ENCODE measurements at regions of chr12 and their contacts with region 1.

Region 1: DNA sequence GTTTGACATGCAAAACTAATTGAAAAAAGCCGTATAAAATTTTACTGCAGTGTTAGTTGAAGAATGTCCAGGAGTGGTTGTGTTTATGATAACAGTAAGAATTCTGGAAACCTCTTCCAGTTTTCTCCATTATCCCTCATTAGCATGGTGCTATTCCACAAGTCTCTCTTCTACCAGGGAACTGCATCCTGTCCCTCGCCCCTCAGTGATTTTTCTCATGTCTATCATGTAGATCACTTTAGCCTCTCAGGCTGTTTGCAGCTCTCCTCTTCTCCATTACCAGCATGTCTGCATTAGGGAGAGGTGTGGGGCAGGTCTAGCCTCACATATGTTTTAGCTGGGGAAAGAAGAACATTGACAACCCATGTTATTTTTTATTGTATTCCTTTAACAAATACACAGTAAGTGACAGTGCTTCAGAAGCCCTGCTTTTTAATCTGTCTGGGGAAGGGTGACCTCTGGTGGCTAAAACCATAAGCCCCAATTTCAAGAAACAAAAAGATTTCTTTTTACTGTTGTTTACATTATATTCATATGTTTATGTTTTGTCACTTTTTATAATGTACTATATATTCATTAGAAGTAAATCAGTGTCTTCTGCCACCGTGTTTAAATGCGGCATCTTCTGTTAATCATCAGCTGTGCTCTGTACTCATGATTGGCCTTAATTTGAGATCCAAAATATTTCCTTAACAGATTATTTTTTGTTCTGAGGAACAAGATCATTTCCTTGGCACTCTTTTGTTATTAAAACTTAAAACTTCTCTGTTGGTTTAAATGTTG is 70.7 kb downstream of the RASSF8 start:
- DNase-seq: peak in 1 of 2 experiments; percentile 69
- H3K4me3 ChIP-seq: no peak overlapping the region
- H3K4me3 Mint-ChIP-seq: no peak overlapping the region
- H3K27ac Mint-ChIP-seq: no peak overlapping the region
- H3K4me1 ChIP-seq: peaks cover 50% of the 10 kb centered on the region
- H3K4me1 Mint-ChIP-seq: peaks cover 54% of the 10 kb centered on the region
- H3K27me3 ChIP-seq: no peaks in the 10 kb centered on the region
- H3K27me3 Mint-ChIP-seq: no peaks in the 10 kb centered on the region
- CTCF ChIP-seq: peak; percentile 84 to 95

Region 2: DNA sequence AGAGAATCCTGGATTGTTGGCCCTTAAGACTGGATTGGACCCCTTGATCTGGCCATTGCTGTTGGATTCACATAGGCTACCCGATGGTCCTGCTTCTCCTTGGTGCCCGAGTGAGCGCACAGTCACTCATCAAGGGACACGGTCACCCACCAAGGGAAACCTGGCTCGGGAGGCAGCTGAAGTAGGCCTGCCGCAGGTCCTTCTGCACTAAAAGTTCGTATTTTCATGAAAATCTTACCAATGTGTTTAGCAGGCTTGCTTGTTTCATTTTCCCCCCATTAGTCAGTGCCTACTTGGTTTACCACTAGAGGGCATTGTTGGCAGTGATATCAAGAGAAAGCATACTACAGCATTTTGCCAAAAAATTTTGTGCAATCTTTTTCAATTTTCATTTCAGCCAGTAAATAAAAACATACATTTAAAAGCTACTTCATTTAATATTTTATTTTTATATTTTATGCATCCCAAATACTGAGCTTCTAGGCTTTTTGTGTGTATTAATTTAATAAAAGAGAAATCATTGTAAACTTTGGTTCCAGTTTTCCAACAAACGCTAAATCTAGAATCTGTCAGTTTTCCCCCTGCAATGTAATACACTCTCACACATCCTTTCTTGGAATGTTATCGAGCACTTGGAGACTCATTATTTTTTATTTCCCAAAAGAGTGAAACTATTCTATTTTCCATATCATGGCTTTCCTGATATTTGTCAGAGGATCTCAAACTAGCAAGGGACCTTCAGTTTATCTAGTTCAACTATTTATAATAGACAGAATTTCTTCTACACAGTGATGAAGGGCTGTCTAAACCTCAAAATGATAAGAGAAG is 592.7 kb before region 1 on chr12:
- CTCF ChIA-PET with region 1: no interaction called
- POLR2A ChIA-PET with region 1: no interaction called
- intact Hi-C with region 1: loop called (anchors 1 kb)
- DNase-seq: peak in 1 of 2 experiments; percentile 75
- H3K4me3 ChIP-seq: no peak overlapping the region
- H3K4me3 Mint-ChIP-seq: peak overlapping the region; percentile 32
- H3K27ac Mint-ChIP-seq: peak overlapping the region; percentile 67
- H3K4me1 ChIP-seq: peaks cover 25% of the 10 kb centered on the region
- H3K4me1 Mint-ChIP-seq: peaks cover 20% of the 10 kb centered on the region
- H3K27me3 ChIP-seq: no peaks in the 10 kb centered on the region
- H3K27me3 Mint-ChIP-seq: no peaks in the 10 kb centered on the region
- CTCF ChIP-seq: peak; percentile 87 to 90

Region 3: DNA sequence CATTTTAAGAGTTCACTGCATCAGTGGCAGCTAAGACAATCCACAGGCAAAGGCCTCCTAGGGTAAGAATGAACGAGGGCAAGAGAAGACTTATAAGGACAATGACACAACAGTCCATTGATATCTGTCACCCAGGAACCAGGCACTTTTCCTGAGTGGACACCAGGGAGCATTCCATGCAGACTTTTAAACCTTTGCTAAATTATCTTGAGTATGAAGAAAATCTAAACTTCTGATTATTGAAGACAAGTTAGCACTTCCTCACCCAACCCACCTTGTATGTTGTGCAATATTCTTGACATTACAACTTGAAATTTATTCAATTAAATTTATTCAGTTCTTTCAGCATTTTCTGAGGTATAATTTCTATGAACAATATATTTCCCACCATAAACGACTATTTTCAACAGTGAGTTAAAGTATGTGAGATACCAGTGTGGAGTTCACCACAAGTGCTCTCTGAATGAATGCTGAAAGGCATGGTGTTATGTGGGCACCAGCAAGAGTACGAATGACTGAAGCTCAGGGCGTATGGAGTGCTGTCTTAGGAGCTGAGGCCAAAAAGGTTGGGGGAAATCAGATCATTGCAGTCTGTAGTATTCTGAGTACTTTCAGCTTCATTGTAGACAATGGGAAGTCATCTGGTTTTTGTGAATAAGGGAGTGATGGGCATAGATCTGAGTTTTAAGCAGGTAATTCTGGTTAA is 351.8 kb before region 1 on chr12:
- CTCF ChIA-PET with region 1: no interaction called
- POLR2A ChIA-PET with region 1: no interaction called
- intact Hi-C with region 1: loop called (anchors 1 kb)
- DNase-seq: no peak
- H3K4me3 ChIP-seq: no peak overlapping the region
- H3K4me3 Mint-ChIP-seq: no peak overlapping the region
- H3K27ac Mint-ChIP-seq: no peak overlapping the region
- H3K4me1 ChIP-seq: peaks cover 15% of the 10 kb centered on the region
- H3K4me1 Mint-ChIP-seq: no peaks in the 10 kb centered on the region
- H3K27me3 ChIP-seq: no peaks in the 10 kb centered on the region
- H3K27me3 Mint-ChIP-seq: no peaks in the 10 kb centered on the region
- CTCF ChIP-seq: peak in 1 of 2 experiments; percentile 21

Region 4: GRCh38 chr12:25958428-25959070 is 70.6 kb before region 1 on chr12 and contains the start of gene RASSF8:
- CTCF ChIA-PET with region 1: no interaction called
- POLR2A ChIA-PET with region 1: no interaction called
- intact Hi-C with region 1: loop called (anchors 2 kb)
- DNase-seq: peak; percentile 65 to 93
- H3K4me3 ChIP-seq: peak within 1 kb of the TSS; percentile 66
- H3K4me3 Mint-ChIP-seq: peak within 1 kb of the TSS; percentile 89
- H3K27ac Mint-ChIP-seq: peak within 1 kb of the TSS; percentile 84
- H3K4me1 ChIP-seq: 0 out of 2 replicates have a peak, but pooled peaks cover 6% of the 10 kb centered on the region
- H3K4me1 Mint-ChIP-seq: peaks cover 8% of the 10 kb centered on the region
- H3K27me3 ChIP-seq: no peaks in the 10 kb centered on the region
- H3K27me3 Mint-ChIP-seq: no peaks in the 10 kb centered on the region
- CTCF ChIP-seq: peak in 1 of 2 experiments; percentile 40
- total RNA-seq, gene RASSF8: 140 and 143 TPM in 2 replicates

Region 5: DNA sequence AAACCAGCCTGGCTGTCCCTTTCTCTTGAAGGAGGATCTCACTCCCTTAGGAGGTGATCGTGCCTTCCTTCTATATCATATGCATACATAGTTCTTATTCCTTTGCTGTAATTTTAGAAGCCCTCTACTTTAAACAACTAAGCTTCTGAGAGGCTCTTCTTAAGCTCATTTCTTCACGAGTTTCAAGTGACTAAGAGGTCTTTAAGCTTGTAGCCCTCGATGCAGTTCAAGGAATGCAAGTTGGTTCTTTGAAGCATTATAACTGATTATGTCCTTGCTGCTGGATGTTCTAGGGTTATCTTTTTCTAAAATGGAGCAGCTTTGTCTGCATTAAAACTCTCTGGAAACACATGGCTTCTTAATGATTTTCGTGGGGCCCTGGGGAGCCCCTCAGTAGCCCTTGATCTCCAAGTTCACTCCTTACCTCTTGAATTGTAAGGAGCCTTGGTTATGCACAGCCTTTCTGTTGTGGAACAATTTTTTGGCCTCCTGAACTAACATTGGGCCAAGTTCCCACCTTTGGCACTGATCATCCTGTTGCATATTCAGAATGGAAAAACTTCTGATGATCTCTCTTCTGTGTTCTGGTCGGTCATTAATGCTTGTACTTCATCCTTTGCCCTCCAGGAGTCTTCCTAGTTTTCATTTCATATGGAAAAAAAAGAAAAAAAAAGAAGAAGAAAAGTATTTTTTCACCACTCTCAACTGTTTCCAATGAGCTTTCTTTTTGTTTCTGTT is 58.1 kb before region 1 on chr12:
- CTCF ChIA-PET with region 1: no interaction called
- POLR2A ChIA-PET with region 1: no interaction called
- intact Hi-C with region 1: no loop called
- DNase-seq: no peak
- H3K4me3 ChIP-seq: no peak overlapping the region
- H3K4me3 Mint-ChIP-seq: no peak overlapping the region
- H3K27ac Mint-ChIP-seq: no peak overlapping the region
- H3K4me1 ChIP-seq: no peaks in the 10 kb centered on the region
- H3K4me1 Mint-ChIP-seq: peaks cover 64% of the 10 kb centered on the region
- H3K27me3 ChIP-seq: no peaks in the 10 kb centered on the region
- H3K27me3 Mint-ChIP-seq: no peaks in the 10 kb centered on the region
- CTCF ChIP-seq: peak in 1 of 2 experiments; percentile 56

Region 6: DNA sequence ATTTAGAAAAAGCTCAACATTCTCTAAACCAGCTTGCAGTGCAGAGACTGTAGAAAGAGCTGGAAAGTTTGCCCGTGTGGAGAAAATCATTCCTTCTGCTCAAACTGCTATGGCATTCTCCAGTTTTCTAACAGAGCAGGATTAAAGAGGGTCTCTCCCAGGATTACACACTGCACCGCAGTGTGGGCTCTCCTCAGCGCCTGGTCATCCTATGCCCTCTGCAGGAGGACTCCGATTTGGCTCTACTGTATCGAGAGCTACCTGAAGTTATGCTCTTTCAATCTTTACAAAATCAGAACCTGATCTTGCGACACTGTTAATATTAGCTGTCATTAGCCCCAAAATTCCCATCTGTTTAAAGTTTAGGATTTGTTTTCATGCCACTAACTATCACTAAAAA is 62.7 kb after region 1 on chr12:
- CTCF ChIA-PET with region 1: interaction called, 5 read pairs
- POLR2A ChIA-PET with region 1: no interaction called
- intact Hi-C with region 1: loop called (anchors 2 kb)
- DNase-seq: peak in 1 of 2 experiments; percentile 42
- H3K4me3 ChIP-seq: no peak overlapping the region
- H3K4me3 Mint-ChIP-seq: peak overlapping the region; percentile 7
- H3K27ac Mint-ChIP-seq: peak overlapping the region; percentile 84
- H3K4me1 ChIP-seq: peaks cover 61% of the 10 kb centered on the region
- H3K4me1 Mint-ChIP-seq: peaks cover 45% of the 10 kb centered on the region
- H3K27me3 ChIP-seq: no peaks in the 10 kb centered on the region
- H3K27me3 Mint-ChIP-seq: no peaks in the 10 kb centered on the region
- CTCF ChIP-seq: peak; percentile 30 to 34